ENCODE measurements at regions of chr13 and their contacts with region 1.

Region 1: DNA sequence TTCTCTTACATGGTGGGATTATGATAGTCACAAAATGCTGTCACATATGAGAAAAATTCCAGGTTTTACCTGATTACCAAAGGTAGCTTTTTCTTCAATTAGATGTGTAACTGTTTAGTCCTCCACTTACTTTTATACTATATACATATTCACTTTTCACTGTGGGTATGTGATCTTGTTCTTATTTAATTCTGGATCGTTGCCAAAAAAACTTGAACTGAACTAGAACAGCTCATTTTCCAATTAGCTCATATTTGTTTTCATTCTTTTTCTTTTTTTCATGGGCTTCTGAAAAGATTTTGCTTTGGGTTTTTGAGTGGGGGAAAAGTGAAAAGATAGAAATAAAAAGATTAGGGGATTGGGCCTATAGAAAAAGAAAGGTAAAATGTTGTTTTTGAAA is 291.9 kb downstream of the NDFIP2 start:
- DNase-seq: no peak

Region 2: GRCh38 chr13:79654520-79654919 is 118.3 kb before region 1 on chr13:
- intact Hi-C with region 1: loop called in 1 of 2 experiments (anchors 5 kb)
- DNase-seq: no peak

Region 3: GRCh38 chr13:79810669-79811068 is 37.9 kb after region 1 on chr13:
- intact Hi-C with region 1: no loop called
- DNase-seq: no peak

Region 4: DNA sequence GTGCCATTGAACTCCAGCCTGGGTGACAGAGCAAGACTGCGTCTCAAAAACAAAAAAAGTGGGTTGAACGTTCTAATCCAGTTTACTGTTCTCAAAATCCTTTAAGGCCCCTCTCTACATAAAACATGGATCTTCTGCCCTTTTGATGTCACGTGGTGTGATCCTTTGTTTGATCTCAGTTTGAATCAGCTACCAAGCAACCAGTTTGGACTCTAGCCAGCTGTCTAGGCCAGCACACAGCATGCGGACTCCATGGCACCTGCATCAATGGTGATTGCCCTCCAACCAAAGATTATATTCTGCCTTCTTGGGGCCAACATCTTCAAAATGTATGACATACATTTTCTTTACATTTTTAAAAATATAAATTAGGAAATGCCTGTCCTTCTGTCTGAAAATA is 73.6 kb after region 1 on chr13:
- intact Hi-C with region 1: no loop called
- DNase-seq: no peak

Measured in posterior vena cava (tissue), 2 donors.